ENCODE measurements at regions of chr17 and their contacts with region 1.

Region 1: GRCh38 chr17:75896415-75897159 is at the start of gene TRIM65:
- DNase-seq: peak; percentile 67 to 84 (median 71)
- H3K4me3 ChIP-seq: peak within 1 kb of the TSS; percentile 66
- H3K4me3 Mint-ChIP-seq: peak within 1 kb of the TSS; percentile 82 to 92 (median 85)
- H3K27ac ChIP-seq: peak within 1 kb of the TSS; percentile 61
- H3K27ac Mint-ChIP-seq: peak within 1 kb of the TSS; percentile 67 to 97 (median 85)
- H3K4me1 ChIP-seq: peaks cover 18% of the 10 kb centered on the region
- H3K4me1 Mint-ChIP-seq: peaks cover 25 to 31% (median 26%) of the 10 kb centered on the region in 3 donors
- H3K27me3 ChIP-seq: no peaks in the 10 kb centered on the region
- H3K27me3 Mint-ChIP-seq: no peaks in the 10 kb centered on the region
- total RNA-seq, gene TRIM65: 34.9 to 35.4 TPM

Region 2: DNA sequence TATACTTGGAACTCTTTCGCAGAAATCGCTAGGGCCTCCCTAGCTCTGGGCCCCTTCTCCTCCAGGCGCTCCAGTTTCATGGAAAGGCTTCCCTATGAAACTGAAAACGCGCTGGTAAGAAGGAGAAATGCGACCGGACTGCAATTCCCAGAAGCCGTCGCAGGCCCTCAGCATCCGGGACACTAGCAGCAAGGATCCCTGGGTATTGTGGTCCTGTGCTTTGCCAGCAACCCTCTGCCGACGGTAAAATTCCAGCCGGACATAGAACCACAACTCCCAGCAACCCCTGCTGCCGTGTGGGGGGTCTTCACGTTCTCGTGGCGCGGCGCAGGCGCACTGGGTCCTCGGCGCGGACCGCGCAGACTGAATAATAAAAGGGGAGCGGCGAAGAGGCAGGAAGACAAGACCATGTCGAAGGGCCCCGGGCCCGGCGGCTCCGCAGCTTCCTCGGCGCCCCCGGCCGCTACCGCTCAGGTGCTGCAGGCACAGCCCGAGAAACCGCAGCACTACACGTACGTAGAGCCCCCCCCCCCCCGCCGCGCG is 112.0 kb before region 1 on chr17 and contains the start of gene UNK:
- CTCF ChIA-PET with region 1: no interaction called
- POLR2A ChIA-PET with region 1: interaction called, 10 read pairs
- DNase-seq: peak; percentile 89 to 98 (median 97)
- H3K4me3 ChIP-seq: peak within 1 kb of the TSS; percentile 67
- H3K4me3 Mint-ChIP-seq: peak within 1 kb of the TSS; percentile 93 to 97 (median 93)
- H3K27ac ChIP-seq: peak within 1 kb of the TSS; percentile 98
- H3K27ac Mint-ChIP-seq: peak within 1 kb of the TSS; percentile 99 to 100 (median 100)
- H3K4me1 ChIP-seq: peaks cover 46% of the 10 kb centered on the region
- H3K4me1 Mint-ChIP-seq: peaks cover 39 to 70% (median 51%) of the 10 kb centered on the region in 3 donors
- H3K27me3 ChIP-seq: no peaks in the 10 kb centered on the region
- H3K27me3 Mint-ChIP-seq: peaks cover 0 to 6% of the 10 kb centered on the region in 2 donors
- total RNA-seq, gene UNK: 24.4 to 29.3 TPM

Region 3: GRCh38 chr17:75864448-75864871 is 32.1 kb before region 1 on chr17:
- CTCF ChIA-PET with region 1: interaction called, 42 read pairs
- POLR2A ChIA-PET with region 1: interaction called, 3 read pairs
- DNase-seq: peak; percentile 19 to 66 (median 47)
- H3K4me3 ChIP-seq: peak overlapping the region; percentile 5
- H3K4me3 Mint-ChIP-seq: peak overlapping the region; percentile 33 to 79 (median 69)
- H3K27ac ChIP-seq: peak overlapping the region; percentile 71
- H3K27ac Mint-ChIP-seq: peak overlapping the region; percentile 85 to 99 (median 92)
- H3K4me1 ChIP-seq: peaks cover 16% of the 10 kb centered on the region
- H3K4me1 Mint-ChIP-seq: peaks cover 22 to 30% (median 26%) of the 10 kb centered on the region in 3 donors
- H3K27me3 ChIP-seq: no peaks in the 10 kb centered on the region
- H3K27me3 Mint-ChIP-seq: peaks cover 0 to 2% of the 10 kb centered on the region in 2 donors

Region 4: DNA sequence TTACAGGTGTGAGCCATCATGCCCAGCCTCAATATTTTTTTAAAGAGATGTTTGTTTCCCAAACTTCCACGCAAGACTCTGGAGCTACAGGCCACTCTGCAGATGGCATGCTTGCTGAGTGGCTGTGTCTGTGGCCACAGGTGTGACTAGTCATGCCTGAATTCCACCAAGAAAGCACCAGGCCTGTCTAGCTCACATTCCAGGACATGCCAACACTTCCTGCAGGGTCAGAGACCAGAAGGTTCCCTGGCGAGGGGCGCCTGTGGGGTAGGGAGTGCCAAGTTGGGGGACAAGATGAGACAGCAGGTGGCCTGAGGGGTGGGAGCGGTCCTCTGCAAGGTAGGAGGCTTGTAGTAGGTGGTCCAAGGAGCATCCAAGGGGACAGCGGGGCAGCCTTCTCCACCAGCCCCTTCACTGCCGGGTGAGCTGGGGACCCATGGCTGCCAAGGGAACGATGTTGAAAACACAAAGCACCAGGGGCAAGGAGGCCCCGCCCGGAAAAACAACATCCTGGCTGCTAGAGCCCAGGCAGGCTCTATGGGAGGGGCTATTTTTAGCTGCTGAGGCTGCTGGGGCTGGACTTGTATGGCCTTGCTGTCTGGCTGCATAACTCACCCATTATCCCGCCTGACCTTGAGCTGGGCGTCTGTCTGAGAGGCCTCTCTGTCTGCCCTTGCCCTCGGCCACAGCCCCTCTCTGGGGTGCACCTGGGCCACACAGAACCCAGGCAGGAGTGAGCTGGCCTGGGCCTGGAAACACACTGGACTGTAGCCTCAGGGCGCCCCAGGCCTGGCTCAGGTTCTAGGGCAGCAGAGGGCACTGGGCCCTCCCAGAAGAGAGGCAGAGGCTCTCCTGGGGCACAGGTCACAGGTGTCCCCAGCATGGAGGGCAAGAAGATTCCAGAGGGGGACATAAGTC is 23.9 kb before region 1 on chr17:
- CTCF ChIA-PET with region 1: interaction called, 51 read pairs
- POLR2A ChIA-PET with region 1: interaction called, 28 read pairs
- DNase-seq: peak; percentile 29 to 82 (median 51)
- H3K4me3 ChIP-seq: no peak overlapping the region
- H3K4me3 Mint-ChIP-seq: peak overlapping the region; percentile 4 to 85 (median 47)
- H3K27ac ChIP-seq: peak overlapping the region; percentile 71
- H3K27ac Mint-ChIP-seq: peak overlapping the region; percentile 76 to 98 (median 93)
- H3K4me1 ChIP-seq: peaks cover 41% of the 10 kb centered on the region
- H3K4me1 Mint-ChIP-seq: peaks cover 29 to 50% (median 32%) of the 10 kb centered on the region in 3 donors
- H3K27me3 ChIP-seq: no peaks in the 10 kb centered on the region
- H3K27me3 Mint-ChIP-seq: no peaks in the 10 kb centered on the region

Region 5: GRCh38 chr17:75877752-75878173 is 18.8 kb before region 1 on chr17:
- CTCF ChIA-PET with region 1: interaction called, 51 read pairs
- POLR2A ChIA-PET with region 1: interaction called, 28 read pairs
- DNase-seq: peak; percentile 49 to 79 (median 67)
- H3K4me3 ChIP-seq: peak overlapping the region; percentile 61
- H3K4me3 Mint-ChIP-seq: peak overlapping the region; percentile 83 to 90 (median 86)
- H3K27ac ChIP-seq: peak overlapping the region; percentile 43
- H3K27ac Mint-ChIP-seq: peak overlapping the region; percentile 76 to 96 (median 87)
- H3K4me1 ChIP-seq: peaks cover 40% of the 10 kb centered on the region
- H3K4me1 Mint-ChIP-seq: peaks cover 35 to 59% (median 39%) of the 10 kb centered on the region in 3 donors
- H3K27me3 ChIP-seq: no peaks in the 10 kb centered on the region
- H3K27me3 Mint-ChIP-seq: peaks cover 0 to 5% of the 10 kb centered on the region in 2 donors

Region 6: GRCh38 chr17:75927286-75927922 is 30.8 kb after region 1 on chr17:
- CTCF ChIA-PET with region 1: no interaction called
- POLR2A ChIA-PET with region 1: no interaction called
- DNase-seq: no peak
- H3K4me3 ChIP-seq: no peak overlapping the region
- H3K4me3 Mint-ChIP-seq: no peak overlapping the region
- H3K27ac ChIP-seq: no peak overlapping the region
- H3K27ac Mint-ChIP-seq: no peak overlapping the region
- H3K4me1 ChIP-seq: no peaks in the 10 kb centered on the region
- H3K4me1 Mint-ChIP-seq: no peaks in the 10 kb centered on the region
- H3K27me3 ChIP-seq: no peaks in the 10 kb centered on the region
- H3K27me3 Mint-ChIP-seq: peaks cover 0 to 1% of the 10 kb centered on the region in 2 donors

Region 7: GRCh38 chr17:76005263-76006149 is 108.9 kb after region 1 on chr17:
- CTCF ChIA-PET with region 1: interaction called, 12 read pairs
- POLR2A ChIA-PET with region 1: no interaction called
- DNase-seq: peak; percentile 60 to 85 (median 72)
- H3K4me3 ChIP-seq: no peak overlapping the region
- H3K4me3 Mint-ChIP-seq: no peak overlapping the region
- H3K27ac ChIP-seq: no peak overlapping the region
- H3K27ac Mint-ChIP-seq: peak overlapping the region in 2 of 8 donors; percentile 41 to 70
- H3K4me1 ChIP-seq: no peaks in the 10 kb centered on the region
- H3K4me1 Mint-ChIP-seq: peaks cover 0 to 6% (median 2%) of the 10 kb centered on the region in 3 donors
- H3K27me3 ChIP-seq: no peaks in the 10 kb centered on the region
- H3K27me3 Mint-ChIP-seq: no peaks in the 10 kb centered on the region